ENCODE measurements at regions of chr22 and their contacts with region 1.

Region 1: GRCh38 chr22:50641696-50642607 is 14.0 kb upstream of the ARSA start:
- DNase-seq: peak; percentile 74
- H3K4me3 ChIP-seq: no peak overlapping the region
- H3K27ac ChIP-seq: no peak overlapping the region
- H3K4me1 ChIP-seq: peaks cover 14% of the 10 kb centered on the region
- H3K27me3 ChIP-seq: peaks cover 23 to 24% of the 10 kb centered on the region in 2 experiments
- CTCF ChIP-seq: peak; percentile 47 to 56
- POLR2A ChIP-seq: no peak

Region 2: DNA sequence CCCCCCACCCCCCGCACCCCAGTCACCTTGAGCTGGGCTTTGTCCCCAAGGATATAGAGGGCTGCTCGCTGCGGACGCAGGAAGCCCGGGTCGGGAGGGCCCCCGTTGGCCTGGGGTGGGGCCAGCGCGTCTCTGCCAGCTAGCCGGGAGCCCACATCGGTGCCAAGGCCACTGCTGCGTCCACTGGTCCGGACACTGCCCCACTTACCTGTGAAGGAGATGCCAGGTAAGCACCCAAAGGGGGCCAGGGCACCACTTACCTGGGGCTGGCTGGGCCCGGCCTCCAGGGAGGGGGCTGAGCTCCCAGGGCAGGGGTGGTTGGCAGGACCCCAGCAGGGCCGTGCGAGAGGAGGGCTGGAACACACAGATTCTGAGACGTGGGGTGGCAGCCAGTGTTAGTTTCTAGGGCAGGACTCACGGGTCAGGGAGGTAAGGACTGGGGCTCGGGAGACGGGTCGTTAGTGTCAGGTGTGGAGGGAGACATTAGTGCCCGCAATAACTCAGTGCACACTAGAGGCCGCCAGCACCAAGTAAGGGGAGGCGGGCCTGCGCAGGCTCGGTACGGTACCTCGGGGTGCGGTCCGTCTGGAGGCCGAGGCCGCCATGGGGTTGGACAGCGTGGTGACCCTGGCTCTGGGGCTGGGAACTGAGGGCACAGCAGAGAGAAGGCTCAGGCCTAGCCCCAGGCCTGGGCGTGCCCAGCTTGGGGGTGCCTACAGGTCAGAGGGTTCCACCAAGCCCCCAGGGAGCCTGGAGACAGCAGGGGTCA is 185.3 kb before region 1 on chr22:
- CTCF ChIA-PET with region 1: no interaction called
- POLR2A ChIA-PET with region 1: no interaction called
- dilution Hi-C with region 1: no loop called
- intact Hi-C with region 1: no loop called
- DNase-seq: no peak
- H3K4me3 ChIP-seq: no peak overlapping the region
- H3K27ac ChIP-seq: no peak overlapping the region
- H3K4me1 ChIP-seq: no peaks in the 10 kb centered on the region
- H3K27me3 ChIP-seq: no peaks in the 10 kb centered on the region
- CTCF ChIP-seq: peak; percentile 7 to 15
- POLR2A ChIP-seq: no peak

Region 3: GRCh38 chr22:50627642-50628542 is 14.1 kb before region 1 on chr22 and contains the start of gene ARSA:
- CTCF ChIA-PET with region 1: interaction called, 22 read pairs
- POLR2A ChIA-PET with region 1: interaction called, 6 read pairs
- dilution Hi-C with region 1: no loop called
- intact Hi-C with region 1: no loop called
- DNase-seq: peak; percentile 77
- H3K4me3 ChIP-seq: peak within 1 kb of the TSS; percentile 31 to 56 (median 47)
- H3K27ac ChIP-seq: no peak within 1 kb of the TSS
- H3K4me1 ChIP-seq: peaks cover 10% of the 10 kb centered on the region
- H3K27me3 ChIP-seq: no peaks in the 10 kb centered on the region
- CTCF ChIP-seq: peak; percentile 12 to 54
- POLR2A ChIP-seq: peak; percentile 89
- total RNA-seq, gene ARSA: 19.3 and 22.3 TPM in 2 replicates

Region 4: GRCh38 chr22:50656122-50657070 is 14.4 kb after region 1 on chr22:
- CTCF ChIA-PET with region 1: interaction called, 20 read pairs
- POLR2A ChIA-PET with region 1: interaction called, 4 read pairs
- dilution Hi-C with region 1: no loop called
- intact Hi-C with region 1: loop called (anchors 2 kb)
- DNase-seq: peak; percentile 96
- H3K4me3 ChIP-seq: no peak overlapping the region
- H3K27ac ChIP-seq: peak overlapping the region; percentile 86
- H3K4me1 ChIP-seq: peaks cover 29% of the 10 kb centered on the region
- H3K27me3 ChIP-seq: no peaks in the 10 kb centered on the region
- CTCF ChIP-seq: no peak
- POLR2A ChIP-seq: peak; percentile 88

Region 5: DNA sequence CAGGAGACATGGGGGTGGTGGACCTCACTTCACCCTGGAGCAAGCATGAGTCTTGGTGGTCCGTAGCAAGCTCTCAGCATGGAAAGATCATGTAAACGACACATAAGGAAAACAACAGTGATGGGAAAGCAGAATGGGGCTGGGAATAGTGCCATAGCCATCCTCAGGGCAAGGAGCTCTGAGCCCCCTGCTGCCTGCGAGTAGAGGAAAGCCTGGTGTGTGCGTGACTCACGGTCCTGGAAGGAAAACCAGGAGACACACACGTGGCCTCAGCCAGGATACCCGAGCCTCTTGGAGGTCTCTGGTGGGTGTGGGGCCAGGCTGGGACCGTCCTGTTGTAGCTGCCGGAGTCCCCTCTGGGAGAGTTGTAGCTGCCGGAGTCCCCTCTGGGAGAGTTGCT is 43.0 kb after region 1 on chr22:
- CTCF ChIA-PET with region 1: interaction called, 13 read pairs
- POLR2A ChIA-PET with region 1: interaction called, 3 read pairs
- dilution Hi-C with region 1: no loop called
- intact Hi-C with region 1: loop called (anchors 5 kb)
- DNase-seq: peak; percentile 36
- H3K4me3 ChIP-seq: no peak overlapping the region
- H3K27ac ChIP-seq: no peak overlapping the region
- H3K4me1 ChIP-seq: peaks cover 7% of the 10 kb centered on the region
- H3K27me3 ChIP-seq: no peaks in the 10 kb centered on the region
- CTCF ChIP-seq: no peak
- POLR2A ChIP-seq: no peak

Measured in endothelial cell of umbilical vein (primary cell).